ENCODE measurements at regions of chr16 and their contacts with region 1.

Region 1: GRCh38 chr16:48609652-48610029 is 339 bp downstream of the N4BP1 start:
- DNase-seq: peak; percentile 63
- ATAC-seq: peak; percentile 34
- H3K4me3 Mint-ChIP-seq: no peak overlapping the region
- H3K27ac Mint-ChIP-seq: peak overlapping the region; percentile 95
- H3K4me1 Mint-ChIP-seq: peaks cover 41% of the 10 kb centered on the region
- H3K27me3 Mint-ChIP-seq: no peaks in the 10 kb centered on the region
- CTCF ChIP-seq: no peak

Region 2: DNA sequence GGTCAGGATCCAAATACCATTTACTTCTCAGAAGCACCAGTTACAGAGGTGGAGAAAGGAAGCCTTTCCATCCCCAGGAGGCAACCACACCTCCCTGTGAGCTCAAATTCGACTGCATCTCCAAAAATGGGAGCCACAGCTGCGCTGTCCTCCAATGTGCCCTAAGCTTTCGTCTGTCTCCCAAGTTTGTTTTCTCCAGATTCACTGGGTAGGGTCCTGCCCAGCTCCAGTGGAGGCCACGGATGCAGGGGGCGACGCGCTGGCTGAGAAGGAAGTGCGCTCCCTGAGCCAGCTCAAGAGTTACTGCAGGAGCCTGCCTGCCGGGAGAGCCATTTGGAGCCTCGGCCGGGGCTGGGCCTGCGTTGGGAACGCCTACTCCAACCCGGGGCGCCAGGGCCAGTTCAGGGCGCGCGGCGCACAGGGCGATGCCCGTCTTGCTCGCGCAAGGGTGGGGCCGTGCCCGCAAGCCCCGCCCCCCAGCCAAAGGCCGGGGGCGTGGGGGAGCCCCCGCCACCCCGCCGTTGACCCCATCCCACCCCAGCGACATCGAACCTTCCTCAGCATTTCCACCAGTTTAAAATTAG is 244.0 kb before region 1 on chr16:
- CTCF ChIA-PET with region 1: no interaction called
- POLR2A ChIA-PET with region 1: interaction called, 3 read pairs
- intact Hi-C with region 1: loop called (anchors 5 kb)
- DNase-seq: peak; percentile 88
- ATAC-seq: peak; percentile 97
- H3K4me3 Mint-ChIP-seq: peak overlapping the region; percentile 98
- H3K27ac Mint-ChIP-seq: peak overlapping the region; percentile 99
- H3K4me1 Mint-ChIP-seq: peaks cover 52% of the 10 kb centered on the region
- H3K27me3 Mint-ChIP-seq: no peaks in the 10 kb centered on the region
- CTCF ChIP-seq: no peak

Region 3: DNA sequence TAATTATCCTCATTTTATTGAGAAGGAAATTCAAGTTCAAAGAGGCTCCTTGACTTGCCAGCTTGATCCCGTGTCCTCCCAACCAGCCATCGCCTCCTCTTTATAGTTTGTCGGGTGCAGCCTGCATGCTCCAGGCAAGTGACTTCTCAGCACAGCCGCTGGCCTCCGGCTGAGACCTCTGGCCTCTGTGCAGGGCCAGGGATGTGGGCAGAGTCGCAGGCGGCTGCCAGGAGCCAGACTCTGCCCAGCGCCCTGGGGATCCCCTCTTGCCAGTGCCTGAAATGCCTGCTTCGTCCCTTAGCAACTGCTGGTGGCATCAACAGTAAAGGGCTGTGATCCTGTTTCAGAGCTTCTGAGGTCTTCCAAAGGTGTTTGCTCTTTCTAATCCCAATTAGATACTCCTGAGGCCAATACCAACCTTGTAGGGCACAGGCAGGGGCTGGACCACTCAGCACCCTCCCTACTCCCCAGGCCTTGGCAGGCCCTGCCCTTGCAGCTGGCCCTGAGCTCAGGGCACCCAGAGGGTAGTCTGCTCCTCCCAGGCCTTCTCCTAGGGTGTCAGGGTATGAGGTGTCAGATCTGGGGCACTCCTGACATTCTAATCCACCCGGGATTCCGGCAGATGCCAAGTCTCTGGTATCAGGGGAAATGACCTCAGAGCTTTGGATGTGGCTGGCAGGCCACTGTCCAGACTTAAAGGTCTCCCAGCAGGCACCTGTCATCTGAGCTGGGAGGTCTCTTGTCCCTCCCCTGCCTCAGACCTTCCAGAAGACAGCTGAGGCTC is 156.5 kb before region 1 on chr16:
- CTCF ChIA-PET with region 1: no interaction called
- POLR2A ChIA-PET with region 1: no interaction called
- intact Hi-C with region 1: loop called (anchors 10 kb)
- DNase-seq: no peak
- ATAC-seq: no peak
- H3K4me3 Mint-ChIP-seq: no peak overlapping the region
- H3K27ac Mint-ChIP-seq: no peak overlapping the region
- H3K4me1 Mint-ChIP-seq: peaks cover 8% of the 10 kb centered on the region
- H3K27me3 Mint-ChIP-seq: peaks cover 6% of the 10 kb centered on the region
- CTCF ChIP-seq: no peak

Region 4: DNA sequence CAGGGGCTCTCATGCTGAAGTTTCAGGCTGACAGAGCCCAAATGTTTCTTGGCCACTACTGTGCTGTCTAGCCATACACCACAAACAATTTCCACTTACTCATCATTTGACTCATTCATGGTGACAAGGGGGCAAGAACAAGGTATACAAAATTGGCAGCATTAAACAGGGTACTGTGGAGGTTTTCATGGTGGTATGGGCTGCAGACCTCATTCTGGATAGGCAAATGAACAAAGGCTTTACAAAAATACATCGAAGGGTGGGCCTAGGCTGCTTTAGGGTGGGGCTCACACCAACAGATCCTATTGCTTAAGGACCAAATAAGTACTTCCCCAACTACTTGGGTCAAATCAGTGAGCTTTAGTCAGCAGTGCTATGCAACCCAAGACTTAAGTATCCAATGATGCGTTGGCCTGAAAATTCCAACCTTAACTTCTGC is 52.7 kb before region 1 on chr16:
- CTCF ChIA-PET with region 1: no interaction called
- POLR2A ChIA-PET with region 1: interaction called, 8 read pairs
- intact Hi-C with region 1: loop called (anchors 5 kb)
- DNase-seq: peak; percentile 66
- ATAC-seq: peak; percentile 79
- H3K4me3 Mint-ChIP-seq: no peak overlapping the region
- H3K27ac Mint-ChIP-seq: peak overlapping the region; percentile 91
- H3K4me1 Mint-ChIP-seq: peaks cover 85% of the 10 kb centered on the region
- H3K27me3 Mint-ChIP-seq: no peaks in the 10 kb centered on the region
- CTCF ChIP-seq: no peak

Region 5: DNA sequence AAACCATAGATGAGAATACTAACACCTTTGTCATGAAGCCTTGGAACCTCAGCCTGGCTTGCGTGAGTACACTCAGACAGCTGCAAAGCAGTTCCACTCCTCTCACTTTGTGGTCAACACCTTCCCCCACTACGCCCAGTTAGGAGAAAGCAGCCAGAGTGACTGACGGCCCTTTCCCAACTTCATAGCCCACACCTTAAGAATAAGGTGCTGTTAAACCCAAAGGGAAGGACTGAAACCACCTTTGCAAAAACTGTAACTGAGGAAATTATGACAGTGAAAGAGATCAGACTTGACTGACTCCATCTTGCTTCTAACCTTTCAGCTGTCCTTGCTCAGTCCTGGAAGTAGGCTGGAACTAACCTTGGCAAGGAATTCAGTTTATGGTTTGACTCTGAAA is 13.3 kb before region 1 on chr16:
- CTCF ChIA-PET with region 1: interaction called, 4 read pairs
- POLR2A ChIA-PET with region 1: interaction called, 9 read pairs
- intact Hi-C with region 1: loop called (anchors 2 kb)
- DNase-seq: peak; percentile 85
- ATAC-seq: peak; percentile 93
- H3K4me3 Mint-ChIP-seq: no peak overlapping the region
- H3K27ac Mint-ChIP-seq: peak overlapping the region; percentile 75
- H3K4me1 Mint-ChIP-seq: peaks cover 60% of the 10 kb centered on the region
- H3K27me3 Mint-ChIP-seq: no peaks in the 10 kb centered on the region
- CTCF ChIP-seq: no peak

Region 6: DNA sequence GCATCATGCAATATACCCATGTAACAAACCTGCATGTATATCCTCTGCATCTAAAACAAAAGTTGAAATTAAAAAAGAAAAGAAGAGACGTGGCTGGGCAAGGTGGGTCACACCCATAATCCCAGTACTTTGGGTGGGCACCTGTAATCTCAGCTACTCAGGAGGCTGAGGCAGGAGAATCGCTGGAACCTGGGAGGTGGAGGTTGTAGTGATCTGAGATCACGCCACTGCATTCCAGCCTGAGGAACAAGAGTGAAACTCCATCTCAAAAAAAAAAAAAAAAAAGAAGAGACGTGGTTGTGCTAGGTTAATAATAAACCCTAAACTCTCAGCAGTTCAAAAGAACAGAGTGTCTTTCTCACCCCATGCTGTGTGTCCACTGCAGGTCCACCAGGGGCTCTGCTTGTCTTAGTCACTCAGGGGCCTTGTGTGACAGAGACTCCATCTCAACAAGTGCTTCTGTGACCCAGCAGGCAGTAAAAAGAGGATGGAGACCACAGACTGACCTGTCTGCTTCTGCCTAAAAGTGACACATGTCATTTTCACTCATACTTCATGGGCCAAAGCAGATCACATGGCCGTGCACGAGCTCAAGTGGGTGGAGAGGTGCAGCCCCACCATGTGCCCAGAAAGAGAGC is 22.6 kb after region 1 on chr16:
- CTCF ChIA-PET with region 1: interaction called, 17 read pairs
- POLR2A ChIA-PET with region 1: no interaction called
- intact Hi-C with region 1: no loop called
- DNase-seq: no peak
- ATAC-seq: no peak
- H3K4me3 Mint-ChIP-seq: no peak overlapping the region
- H3K27ac Mint-ChIP-seq: no peak overlapping the region
- H3K4me1 Mint-ChIP-seq: peaks cover 10% of the 10 kb centered on the region
- H3K27me3 Mint-ChIP-seq: no peaks in the 10 kb centered on the region
- CTCF ChIP-seq: no peak

Measured in activated CD8-positive, alpha-beta T cell treated with anti-CD3 and anti-CD28 coated beads for 36 hours (primary cell).